K562 (cell line): ENCODE measurements at regions of chr1 and their contacts with region 1.

Region 1: GRCh38 chr1:94854458-94855306 is 34.5 kb downstream of the SLC44A3 start:
- DNase-seq: peak; percentile 85 to 87 (median 86)
- ATAC-seq: peak; percentile 99
- H3K4me3 ChIP-seq: peak overlapping the region; percentile 28
- H3K27ac ChIP-seq: no peak overlapping the region
- H3K4me1 ChIP-seq: no peaks in the 10 kb centered on the region; a peak in 1 of 5 replicates
- H3K27me3 ChIP-seq: peaks cover 3 to 5% of the 10 kb centered on the region in 2 experiments; a peak in 4 of 5 replicates
- CTCF ChIP-seq: peak; percentile 91 to 92 (median 91)
- EP300 ChIP-seq: no peak
- POLR2A ChIP-seq: no peak
- RAD21 ChIP-seq: peak; percentile 87 to 94

Region 2: GRCh38 chr1:95247607-95248006 is 392.9 kb after region 1 on chr1:
- CTCF ChIA-PET with region 1: no interaction called
- POLR2A ChIA-PET with region 1: no interaction called
- in situ Hi-C with region 1: loop called (anchors 10 kb)
- intact Hi-C with region 1: no loop called
- DNase-seq: no peak
- ATAC-seq: no peak
- H3K4me3 ChIP-seq: no peak overlapping the region
- H3K27ac ChIP-seq: no peak overlapping the region
- H3K4me1 ChIP-seq: 0 out of 5 replicates have a peak, but pooled peaks cover 0 to 2% of the 10 kb centered on the region in 2 experiments
- H3K27me3 ChIP-seq: no peaks in the 10 kb centered on the region
- CTCF ChIP-seq: no peak
- EP300 ChIP-seq: no peak
- POLR2A ChIP-seq: no peak
- RAD21 ChIP-seq: no peak